ENCODE measurements at regions of chr6 and their contacts with region 1.

Region 1: GRCh38 chr6:152552616-152553209 is 84.4 kb downstream of the SYNE1 start:
- H3K4me3 Mint-ChIP-seq: no peak overlapping the region
- H3K27ac Mint-ChIP-seq: no peak overlapping the region
- H3K4me1 Mint-ChIP-seq: peaks cover 6% of the 10 kb centered on the region
- H3K27me3 Mint-ChIP-seq: peaks cover 2% of the 10 kb centered on the region

Region 2: GRCh38 chr6:152642989-152643388 is 90.3 kb after region 1 on chr6:
- intact Hi-C with region 1: loop called (anchors 1 kb)
- H3K4me3 Mint-ChIP-seq: no peak overlapping the region
- H3K27ac Mint-ChIP-seq: no peak overlapping the region
- H3K4me1 Mint-ChIP-seq: peaks cover 3% of the 10 kb centered on the region
- H3K27me3 Mint-ChIP-seq: peaks cover 19% of the 10 kb centered on the region

Region 3: GRCh38 chr6:152669895-152670294 is 117.2 kb after region 1 on chr6:
- intact Hi-C with region 1: loop called (anchors 2 kb)
- H3K4me3 Mint-ChIP-seq: no peak overlapping the region
- H3K27ac Mint-ChIP-seq: no peak overlapping the region
- H3K4me1 Mint-ChIP-seq: peaks cover 4% of the 10 kb centered on the region
- H3K27me3 Mint-ChIP-seq: no peaks in the 10 kb centered on the region

Region 4: DNA sequence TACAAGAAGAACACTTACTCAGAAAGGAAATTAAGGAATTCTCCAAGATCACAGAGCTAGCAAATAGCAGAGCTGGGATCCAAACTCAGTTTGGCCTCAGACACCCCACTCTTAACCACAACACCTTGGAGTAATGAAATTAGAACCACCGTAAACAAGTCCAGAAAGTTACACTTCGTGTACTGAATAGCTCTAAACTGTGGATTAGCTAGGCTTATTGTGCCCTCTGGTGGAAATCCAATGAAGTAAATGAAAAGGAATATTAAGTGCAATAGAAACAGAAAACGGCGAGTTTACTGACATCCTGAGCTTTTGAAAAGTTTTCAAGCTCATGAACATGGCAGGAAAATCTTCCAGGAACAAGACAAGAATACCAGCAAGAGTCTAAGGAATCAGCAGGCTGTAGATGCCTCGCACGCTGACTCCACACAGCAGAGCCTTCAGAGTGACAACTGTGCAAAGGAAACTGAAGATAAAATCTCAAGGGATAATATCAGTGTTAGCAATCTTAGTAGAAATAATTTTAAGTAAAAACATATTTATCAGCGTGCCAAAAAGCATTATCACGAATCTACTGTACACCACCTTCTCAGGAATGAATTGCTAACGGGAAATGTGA is 395.5 kb after region 1 on chr6:
- intact Hi-C with region 1: loop called (anchors 5 kb)
- H3K4me3 Mint-ChIP-seq: peak overlapping the region; percentile 13
- H3K27ac Mint-ChIP-seq: no peak overlapping the region
- H3K4me1 Mint-ChIP-seq: peaks cover 8% of the 10 kb centered on the region
- H3K27me3 Mint-ChIP-seq: peaks cover 2% of the 10 kb centered on the region

Measured in dendritic cell treated with granulocyte-macrophage colony-stimulating factor and Interleukin-4, amounts not matched to agents 40 ng/mL and 50 ng/mL, for 4 days (primary cell).